ENCODE measurements at regions of chr4 and their contacts with region 1.

Region 1: GRCh38 chr4:169024762-169025161 is 14.7 kb upstream of the CBR4 start:
- DNase-seq: peak in 1 of 5 donors; percentile 17
- ATAC-seq: peak; percentile 58 to 87 (median 82)
- H3K4me3 ChIP-seq: no peak overlapping the region
- H3K27ac ChIP-seq: no peak overlapping the region
- H3K4me1 ChIP-seq: peaks cover 0 to 4% (median 0%) of the 10 kb centered on the region in 12 donors
- H3K27me3 ChIP-seq: no peaks in the 10 kb centered on the region
- CTCF ChIP-seq: peak; percentile 47 to 74 (median 68)
- POLR2A ChIP-seq: no peak

Region 2: GRCh38 chr4:169128902-169129301 is 104.1 kb after region 1 on chr4:
- intact Hi-C with region 1: loop called in 1 of 10 experiments (anchors 10 kb)
- DNase-seq: no peak
- ATAC-seq: no peak
- H3K4me3 ChIP-seq: no peak overlapping the region
- H3K27ac ChIP-seq: no peak overlapping the region
- H3K4me1 ChIP-seq: peaks cover 0 to 24% (median 0%) of the 10 kb centered on the region in 12 donors
- H3K27me3 ChIP-seq: no peaks in the 10 kb centered on the region
- CTCF ChIP-seq: no peak
- POLR2A ChIP-seq: no peak

Region 3: GRCh38 chr4:169311643-169312365 is 287.0 kb after region 1 on chr4:
- intact Hi-C with region 1: loop called in 6 of 10 experiments (anchors 5 to 10 kb)
- DNase-seq: peak in 2 of 5 donors; percentile 32 to 40
- ATAC-seq: peak; percentile 39 to 87 (median 84)
- H3K4me3 ChIP-seq: no peak overlapping the region
- H3K27ac ChIP-seq: no peak overlapping the region
- H3K4me1 ChIP-seq: peaks cover 6 to 25% (median 19%) of the 10 kb centered on the region in 12 donors
- H3K27me3 ChIP-seq: no peaks in the 10 kb centered on the region
- CTCF ChIP-seq: peak; percentile 47 to 76 (median 58)
- POLR2A ChIP-seq: no peak

Region 4: DNA sequence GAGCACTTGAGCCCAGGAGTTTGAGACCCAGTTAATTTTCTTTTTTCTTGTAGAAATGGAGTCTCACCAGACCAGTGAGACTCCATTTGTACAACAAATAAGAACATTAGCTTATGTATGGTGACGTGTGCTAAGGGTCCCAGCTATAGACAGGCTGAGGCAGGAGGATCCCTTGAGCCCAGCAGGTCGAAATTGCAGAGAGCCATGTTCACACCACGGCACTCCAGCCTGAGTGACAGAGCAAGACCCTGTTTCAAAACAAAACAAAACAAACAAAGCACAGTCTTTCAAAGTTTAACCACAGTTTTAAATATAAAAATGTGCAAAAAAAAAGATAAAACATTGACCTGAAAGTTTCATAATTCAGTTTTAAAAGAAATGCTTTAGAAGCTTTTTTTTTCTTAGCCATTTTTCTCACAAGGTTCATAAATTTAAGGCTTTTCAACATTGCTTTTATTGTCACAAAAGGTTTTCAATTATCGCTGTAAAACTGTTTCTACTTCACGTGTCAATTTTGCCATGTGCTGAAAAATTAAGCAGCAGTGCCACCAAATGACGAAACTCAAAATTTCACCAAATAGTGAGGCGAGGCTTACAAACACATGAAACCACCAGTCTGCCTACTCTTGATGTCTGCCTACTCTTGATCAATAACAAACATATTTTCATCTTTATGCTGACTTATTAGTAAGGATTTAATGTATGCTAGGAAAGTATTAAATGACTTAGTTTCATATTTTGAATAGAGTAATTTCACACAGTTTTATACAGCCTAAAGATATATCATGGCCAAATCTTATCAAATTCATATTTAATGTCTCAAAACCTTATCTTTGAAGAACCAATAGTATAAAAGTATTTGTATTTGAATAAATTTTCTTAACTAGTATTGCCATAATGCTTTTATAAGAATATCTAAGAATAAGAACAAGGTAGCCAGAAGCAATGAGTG is 461.3 kb after region 1 on chr4:
- intact Hi-C with region 1: loop called (anchors 2 to 5 kb)
- DNase-seq: no peak
- ATAC-seq: peak in 2 of 4 donors; percentile 53 to 63
- H3K4me3 ChIP-seq: peak overlapping the region in 1 of 12 donors; percentile 8
- H3K27ac ChIP-seq: no peak overlapping the region
- H3K4me1 ChIP-seq: peaks cover 0 to 5% (median 0%) of the 10 kb centered on the region in 12 donors
- H3K27me3 ChIP-seq: no peaks in the 10 kb centered on the region
- CTCF ChIP-seq: peak; percentile 18 to 72 (median 58)
- POLR2A ChIP-seq: no peak

Region 5: GRCh38 chr4:169566021-169566818 is 541.5 kb after region 1 on chr4:
- intact Hi-C with region 1: loop called in 2 of 10 experiments (anchors 10 kb)
- DNase-seq: peak in 2 of 5 donors; percentile 17 to 32
- ATAC-seq: peak; percentile 61 to 78 (median 75)
- H3K4me3 ChIP-seq: peak overlapping the region in 4 of 12 donors; percentile 8 to 26 (median 13)
- H3K27ac ChIP-seq: peak overlapping the region in 2 of 12 donors; percentile 0 to 17
- H3K4me1 ChIP-seq: peaks cover 0 to 17% (median 6%) of the 10 kb centered on the region in 12 donors
- H3K27me3 ChIP-seq: no peaks in the 10 kb centered on the region
- CTCF ChIP-seq: peak; percentile 56 to 86 (median 72)
- POLR2A ChIP-seq: no peak

Measured in heart left ventricle (tissue), 16 donors.